ENCODE measurements at regions of chr20 and their contacts with region 1.

Region 1: GRCh38 chr20:62302341-62303058 is at the start of gene ADRM1:
- DNase-seq: peak; percentile 97
- H3K4me3 ChIP-seq: peak within 1 kb of the TSS; percentile 69 to 95 (median 88)
- H3K27ac ChIP-seq: peak within 1 kb of the TSS; percentile 65
- H3K4me1 ChIP-seq: peaks cover 32% of the 10 kb centered on the region
- H3K27me3 ChIP-seq: no peaks in the 10 kb centered on the region
- CTCF ChIP-seq: peak; percentile 46 to 94
- total RNA-seq, gene ADRM1: 139 to 140 TPM

Region 2: GRCh38 chr20:62201173-62202082 is 101.1 kb before region 1 on chr20:
- CTCF ChIA-PET with region 1: no interaction called
- dilution Hi-C with region 1: no loop called
- in situ Hi-C with region 1: no loop called
- intact Hi-C with region 1: no loop called
- DNase-seq: no peak
- H3K4me3 ChIP-seq: no peak overlapping the region
- H3K27ac ChIP-seq: no peak overlapping the region
- H3K4me1 ChIP-seq: no peaks in the 10 kb centered on the region
- H3K27me3 ChIP-seq: no peaks in the 10 kb centered on the region
- CTCF ChIP-seq: no peak

Region 3: DNA sequence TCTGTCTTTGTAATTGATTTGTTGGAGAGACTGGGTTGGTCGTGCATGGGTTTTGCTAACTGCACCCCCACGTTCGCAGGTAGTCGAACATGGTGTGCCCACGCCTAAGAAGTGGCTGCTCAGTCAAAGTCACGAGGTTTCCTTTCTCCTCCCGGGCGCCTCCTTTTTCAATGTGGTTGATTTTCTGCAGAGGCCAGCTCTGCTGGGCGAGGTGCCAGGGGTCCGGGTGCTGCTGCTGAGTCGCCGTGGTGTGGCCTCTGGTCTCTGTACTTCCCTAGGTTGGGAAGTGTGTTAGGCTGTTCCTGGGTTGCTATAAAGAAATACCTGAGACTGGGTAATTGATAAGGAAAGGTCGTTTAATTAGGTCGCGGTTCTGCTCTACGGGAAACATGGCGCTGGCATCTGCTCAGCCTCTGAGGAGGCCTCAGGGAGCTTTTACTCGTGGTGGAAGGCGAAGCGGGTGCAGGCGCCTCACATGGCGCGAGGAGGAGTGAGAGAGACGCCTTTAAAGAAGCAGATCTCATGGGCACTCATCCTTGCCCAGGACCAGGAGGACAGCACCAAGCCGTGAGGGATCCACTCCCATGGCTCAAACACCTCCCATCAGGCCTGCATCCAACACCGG is 50.0 kb before region 1 on chr20:
- CTCF ChIA-PET with region 1: no interaction called
- dilution Hi-C with region 1: loop called (anchors 5 kb)
- in situ Hi-C with region 1: no loop called
- intact Hi-C with region 1: no loop called
- DNase-seq: peak; percentile 64
- H3K4me3 ChIP-seq: no peak overlapping the region
- H3K27ac ChIP-seq: no peak overlapping the region
- H3K4me1 ChIP-seq: peaks cover 14% of the 10 kb centered on the region
- H3K27me3 ChIP-seq: no peaks in the 10 kb centered on the region
- CTCF ChIP-seq: no peak

Region 4: GRCh38 chr20:62339647-62340070 is 37.2 kb after region 1 on chr20:
- CTCF ChIA-PET with region 1: no interaction called
- dilution Hi-C with region 1: loop called (anchors 5 kb)
- in situ Hi-C with region 1: no loop called
- intact Hi-C with region 1: no loop called
- DNase-seq: no peak
- H3K4me3 ChIP-seq: no peak overlapping the region
- H3K27ac ChIP-seq: no peak overlapping the region
- H3K4me1 ChIP-seq: no peaks in the 10 kb centered on the region
- H3K27me3 ChIP-seq: no peaks in the 10 kb centered on the region
- CTCF ChIP-seq: no peak

Region 5: DNA sequence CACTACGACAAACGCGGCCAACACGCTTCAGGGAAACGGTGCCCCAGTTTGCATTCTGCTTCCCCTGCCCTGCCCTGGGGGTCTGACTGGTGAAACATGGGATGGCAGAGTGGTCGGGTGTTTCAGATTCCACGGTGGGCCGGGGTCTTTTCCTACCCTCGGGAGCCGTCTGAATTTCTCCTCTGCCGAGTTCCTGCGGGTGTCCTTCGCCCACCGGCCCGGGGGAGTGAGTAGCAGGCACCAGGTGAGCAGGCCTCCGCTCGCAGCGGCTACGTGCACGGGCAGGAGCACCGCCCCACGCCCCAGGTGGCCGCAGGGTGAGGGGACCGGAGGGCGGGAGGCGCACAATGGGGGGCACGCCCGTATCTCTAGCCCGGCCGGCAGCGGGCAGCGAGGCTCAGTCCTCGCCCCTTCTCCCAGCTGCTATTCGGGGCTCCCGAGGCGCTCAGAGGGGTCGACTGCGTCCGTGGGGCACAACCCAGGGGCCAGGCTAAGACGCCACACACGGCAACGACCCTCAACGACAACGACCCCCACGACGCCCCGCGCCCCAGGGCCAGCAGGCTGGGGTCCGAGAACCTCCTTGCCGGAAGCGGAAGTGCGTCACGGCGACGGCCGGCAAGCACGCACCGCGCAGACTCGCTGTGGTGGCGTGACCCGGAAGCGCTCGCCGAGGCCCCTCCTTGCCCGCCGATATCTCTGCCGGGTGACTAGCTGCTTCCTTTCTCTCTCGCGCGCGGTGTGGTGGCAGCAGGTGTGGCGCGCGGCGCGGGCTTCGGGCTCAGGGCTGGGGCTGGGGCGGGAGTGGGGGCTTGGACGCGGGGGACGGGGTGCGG is 84.1 kb after region 1 on chr20 and contains the start of gene RPS21:
- CTCF ChIA-PET with region 1: interaction called, 5 read pairs
- dilution Hi-C with region 1: no loop called
- in situ Hi-C with region 1: loop called (anchors 5 kb)
- intact Hi-C with region 1: loop called (anchors 1 kb)
- DNase-seq: peak; percentile 85
- H3K4me3 ChIP-seq: peak within 1 kb of the TSS; percentile 90 to 100 (median 92)
- H3K27ac ChIP-seq: peak within 1 kb of the TSS; percentile 66
- H3K4me1 ChIP-seq: peaks cover 19% of the 10 kb centered on the region
- H3K27me3 ChIP-seq: no peaks in the 10 kb centered on the region
- CTCF ChIP-seq: no peak
- total RNA-seq, gene RPS21: 894 to 1,553 TPM

Region 6: GRCh38 chr20:62407221-62407992 is 104.9 kb after region 1 on chr20 and contains the start of gene CABLES2:
- CTCF ChIA-PET with region 1: interaction called, 6 read pairs
- dilution Hi-C with region 1: no loop called
- in situ Hi-C with region 1: no loop called
- intact Hi-C with region 1: loop called (anchors 1 kb)
- DNase-seq: peak; percentile 91
- H3K4me3 ChIP-seq: peak within 1 kb of the TSS; percentile 56 to 71 (median 69)
- H3K27ac ChIP-seq: no peak within 1 kb of the TSS
- H3K4me1 ChIP-seq: peaks cover 26% of the 10 kb centered on the region
- H3K27me3 ChIP-seq: no peaks in the 10 kb centered on the region
- CTCF ChIP-seq: no peak
- total RNA-seq, gene CABLES2: 2.3 to 4.4 TPM

Region 7: GRCh38 chr20:62539198-62540045 is 236.9 kb after region 1 on chr20:
- CTCF ChIA-PET with region 1: no interaction called
- dilution Hi-C with region 1: loop called (anchors 5 kb)
- in situ Hi-C with region 1: no loop called
- intact Hi-C with region 1: no loop called
- DNase-seq: no peak
- H3K4me3 ChIP-seq: no peak overlapping the region
- H3K27ac ChIP-seq: no peak overlapping the region
- H3K4me1 ChIP-seq: no peaks in the 10 kb centered on the region
- H3K27me3 ChIP-seq: peaks cover 15% of the 10 kb centered on the region
- CTCF ChIP-seq: no peak

Region 8: DNA sequence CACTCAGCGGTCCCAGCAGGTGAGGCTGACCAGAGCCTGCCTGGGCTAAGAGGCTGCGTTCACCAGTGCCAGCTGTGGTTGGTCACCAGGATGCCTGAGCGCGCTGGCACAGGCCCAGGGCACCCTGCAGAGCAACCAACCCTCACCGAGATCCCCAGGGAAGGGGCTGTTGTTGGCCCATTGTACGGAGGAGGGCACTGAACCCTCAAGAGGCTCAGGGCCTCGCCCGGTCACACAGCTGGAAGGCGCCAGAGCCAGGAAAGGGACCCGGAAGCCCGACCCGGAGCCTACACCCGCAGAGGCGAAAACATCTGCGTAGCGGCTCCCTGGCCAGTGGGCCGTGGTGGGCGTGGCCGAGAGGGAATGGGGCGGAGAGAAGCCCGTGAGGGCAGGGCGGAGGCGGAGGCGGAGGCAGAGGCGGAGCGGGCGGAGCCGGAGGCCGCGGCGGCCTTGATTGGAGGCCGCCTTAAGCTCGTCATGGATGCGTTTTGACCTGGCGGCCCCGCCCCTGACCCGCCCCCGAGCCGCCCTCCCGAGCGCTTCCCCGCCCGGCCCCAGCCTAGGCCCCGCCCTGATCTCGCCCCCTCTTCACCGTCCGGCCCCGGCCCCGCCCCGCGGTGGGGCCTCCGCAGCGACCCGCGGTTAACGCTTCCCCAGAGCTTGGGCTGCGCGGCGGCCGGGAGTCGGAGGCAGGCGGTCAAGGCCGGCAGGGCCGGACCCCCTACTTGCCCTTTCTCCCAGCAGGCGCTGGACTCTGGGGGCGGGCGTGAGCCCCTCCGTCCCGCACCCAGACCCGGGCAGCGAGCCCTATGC is 491.6 kb after region 1 on chr20:
- CTCF ChIA-PET with region 1: no interaction called
- dilution Hi-C with region 1: no loop called
- in situ Hi-C with region 1: no loop called
- intact Hi-C with region 1: loop called (anchors 5 kb)
- DNase-seq: peak; percentile 94
- H3K4me3 ChIP-seq: peak overlapping the region; percentile 46 to 66 (median 51)
- H3K27ac ChIP-seq: peak overlapping the region; percentile 61
- H3K4me1 ChIP-seq: peaks cover 44% of the 10 kb centered on the region
- H3K27me3 ChIP-seq: no peaks in the 10 kb centered on the region
- CTCF ChIP-seq: no peak

Measured in mammary epithelial cell (primary cell).